H1 (cell line): ENCODE measurements at regions of chr3 and their contacts with region 1.

Region 1: GRCh38 chr3:124928333-124929202 is 6.0 kb downstream of the MUC13 start:
- DNase-seq: peak in 1 of 2 experiments; percentile 66
- H3K4me3 ChIP-seq: no peak overlapping the region
- H3K27ac ChIP-seq: no peak overlapping the region
- H3K4me1 ChIP-seq: no peaks in the 10 kb centered on the region
- H3K27me3 ChIP-seq: no peaks in the 10 kb centered on the region; a peak in 1 of 7 replicates
- CTCF ChIP-seq: peak in 2 of 3 experiments; percentile 71 to 81; a peak in 3 of 4 replicates
- EP300 ChIP-seq: no peak
- POLR2A ChIP-seq: no peak
- RAD21 ChIP-seq: peak; percentile 72 to 78

Region 2: GRCh38 chr3:124876401-124876878 is 52.1 kb before region 1 on chr3:
- CTCF ChIA-PET with region 1: no interaction called
- POLR2A ChIA-PET with region 1: no interaction called
- DNase-seq: no peak
- H3K4me3 ChIP-seq: no peak overlapping the region
- H3K27ac ChIP-seq: no peak overlapping the region
- H3K4me1 ChIP-seq: peaks cover 0 to 9% (median 5%) of the 10 kb centered on the region in 4 experiments; a peak in 5 of 7 replicates
- H3K27me3 ChIP-seq: no peaks in the 10 kb centered on the region
- CTCF ChIP-seq: no peak
- EP300 ChIP-seq: no peak
- POLR2A ChIP-seq: peak in 1 of 2 experiments; percentile 18; a peak in 1 of 3 replicates
- RAD21 ChIP-seq: no peak

Region 3: GRCh38 chr3:124982855-124983254 is 54.3 kb after region 1 on chr3:
- CTCF ChIA-PET with region 1: interaction called, 20 read pairs
- POLR2A ChIA-PET with region 1: no interaction called
- DNase-seq: no peak
- H3K4me3 ChIP-seq: no peak overlapping the region
- H3K27ac ChIP-seq: no peak overlapping the region
- H3K4me1 ChIP-seq: no peaks in the 10 kb centered on the region; a peak in 1 of 7 replicates
- H3K27me3 ChIP-seq: no peaks in the 10 kb centered on the region
- CTCF ChIP-seq: no peak
- EP300 ChIP-seq: no peak
- POLR2A ChIP-seq: no peak
- RAD21 ChIP-seq: no peak